Transverse colon (tissue), 4 donors: ENCODE measurements at regions of chr14 and their contacts with region 1.

Region 1: DNA sequence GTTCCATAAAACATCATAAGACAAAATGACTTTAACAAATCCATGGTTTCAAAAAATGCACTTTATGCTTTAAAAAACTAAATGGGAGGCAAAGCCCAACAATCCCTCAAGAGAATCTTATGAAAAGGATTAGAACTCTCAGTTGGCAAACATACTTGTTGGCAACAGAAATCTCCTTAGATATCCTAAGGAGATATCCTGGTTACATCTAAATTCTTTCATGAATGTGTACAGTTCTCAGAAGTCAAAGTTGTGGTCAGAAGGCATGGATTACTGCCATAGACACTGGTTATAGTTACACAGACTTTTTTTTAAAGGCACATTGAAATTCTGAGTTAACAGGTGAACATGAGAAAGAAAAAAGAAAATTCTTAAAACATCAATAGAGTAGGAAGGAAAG is 17.5 kb upstream of the ISM2 start:
- DNase-seq: no peak
- H3K4me3 ChIP-seq: no peak overlapping the region
- H3K27ac ChIP-seq: no peak overlapping the region
- H3K4me1 ChIP-seq: no peaks in the 10 kb centered on the region
- H3K27me3 ChIP-seq: no peaks in the 10 kb centered on the region
- CTCF ChIP-seq: no peak
- EP300 ChIP-seq: no peak
- POLR2A ChIP-seq: no peak

Region 2: GRCh38 chr14:76380991-76381390 is 1135.1 kb before region 1 on chr14:
- in situ Hi-C with region 1: no loop called
- intact Hi-C with region 1: loop called (anchors 5 kb)
- DNase-seq: no peak
- H3K4me3 ChIP-seq: no peak overlapping the region
- H3K27ac ChIP-seq: no peak overlapping the region
- H3K4me1 ChIP-seq: peaks cover 0 to 16% (median 12%) of the 10 kb centered on the region in 4 donors
- H3K27me3 ChIP-seq: peaks cover 97% of the 10 kb centered on the region
- CTCF ChIP-seq: no peak
- EP300 ChIP-seq: no peak
- POLR2A ChIP-seq: no peak